HEK293 (cell line): ENCODE measurements at regions of chr9 and their contacts with region 1.

Region 1: GRCh38 chr9:98056269-98057137 is at the start of gene NANS:
- H3K4me3 ChIP-seq: peak within 1 kb of the TSS; percentile 83
- H3K27ac ChIP-seq: peak within 1 kb of the TSS; percentile 47
- H3K4me1 ChIP-seq: no peaks in the 10 kb centered on the region
- CTCF ChIP-seq: peak; percentile 46; the same call in 1 of the 2 replicates

Region 2: DNA sequence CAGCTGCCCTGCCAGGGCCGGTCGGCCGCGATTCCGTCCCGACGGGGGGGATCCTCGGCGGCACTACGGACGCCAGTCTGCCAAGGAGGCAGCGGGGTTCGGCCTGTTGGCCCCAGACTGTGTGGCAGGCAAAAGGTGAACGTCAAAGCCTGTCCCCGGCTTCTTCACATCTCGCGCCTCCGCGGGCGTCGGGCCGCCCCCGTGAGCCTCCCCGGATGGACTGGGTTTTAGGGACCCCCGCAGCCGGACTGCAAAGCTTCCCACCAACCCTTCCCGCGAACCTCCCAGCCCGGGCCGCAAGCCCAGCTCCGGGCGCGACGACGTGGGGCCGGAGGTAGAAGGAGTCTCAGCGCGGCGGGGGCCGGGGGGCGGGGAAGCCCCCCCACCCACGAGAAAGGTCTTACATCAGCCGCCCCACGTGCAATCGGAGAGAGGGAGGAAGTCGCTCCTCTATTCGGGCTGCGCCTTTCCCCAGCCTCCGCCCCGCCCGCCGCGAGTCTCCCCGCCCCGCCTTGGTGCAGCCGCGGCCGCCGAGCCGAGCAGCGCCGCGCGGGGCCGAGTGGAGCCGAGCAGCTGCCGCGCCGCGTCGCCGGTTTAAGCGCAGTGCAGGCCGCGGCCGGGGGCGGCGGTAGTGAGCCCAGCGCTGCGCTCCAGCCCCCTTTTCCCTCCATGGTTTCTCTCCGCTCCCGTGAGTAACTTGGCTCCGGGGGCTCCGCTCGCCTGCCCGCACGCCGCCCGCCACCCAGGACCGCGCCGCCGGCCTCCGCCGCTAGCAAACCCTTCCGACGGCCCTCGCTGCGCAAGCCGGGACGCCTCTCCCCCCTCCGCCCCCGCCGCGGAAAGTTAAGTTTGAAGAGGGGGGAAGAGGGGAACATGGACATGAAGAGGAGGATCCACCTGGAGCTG is 73.6 kb before region 1 on chr9 and contains the start of gene ANP32B:
- CTCF ChIA-PET with region 1: interaction called, 3 read pairs
- POLR2A ChIA-PET with region 1: interaction called, 41 read pairs
- H3K4me3 ChIP-seq: peak within 1 kb of the TSS; percentile 93
- H3K27ac ChIP-seq: peak within 1 kb of the TSS; percentile 100
- H3K4me1 ChIP-seq: peaks cover 9% of the 10 kb centered on the region
- CTCF ChIP-seq: peak; percentile 31; the same call in 1 of the 2 replicates

Region 3: GRCh38 chr9:98034593-98035546 is 21.6 kb before region 1 on chr9:
- CTCF ChIA-PET with region 1: interaction called, 7 read pairs
- POLR2A ChIA-PET with region 1: interaction called, 14 read pairs
- H3K4me3 ChIP-seq: no peak overlapping the region
- H3K27ac ChIP-seq: no peak overlapping the region
- H3K4me1 ChIP-seq: no peaks in the 10 kb centered on the region
- CTCF ChIP-seq: peak; percentile 33; the same call in 1 of the 2 replicates

Region 4: DNA sequence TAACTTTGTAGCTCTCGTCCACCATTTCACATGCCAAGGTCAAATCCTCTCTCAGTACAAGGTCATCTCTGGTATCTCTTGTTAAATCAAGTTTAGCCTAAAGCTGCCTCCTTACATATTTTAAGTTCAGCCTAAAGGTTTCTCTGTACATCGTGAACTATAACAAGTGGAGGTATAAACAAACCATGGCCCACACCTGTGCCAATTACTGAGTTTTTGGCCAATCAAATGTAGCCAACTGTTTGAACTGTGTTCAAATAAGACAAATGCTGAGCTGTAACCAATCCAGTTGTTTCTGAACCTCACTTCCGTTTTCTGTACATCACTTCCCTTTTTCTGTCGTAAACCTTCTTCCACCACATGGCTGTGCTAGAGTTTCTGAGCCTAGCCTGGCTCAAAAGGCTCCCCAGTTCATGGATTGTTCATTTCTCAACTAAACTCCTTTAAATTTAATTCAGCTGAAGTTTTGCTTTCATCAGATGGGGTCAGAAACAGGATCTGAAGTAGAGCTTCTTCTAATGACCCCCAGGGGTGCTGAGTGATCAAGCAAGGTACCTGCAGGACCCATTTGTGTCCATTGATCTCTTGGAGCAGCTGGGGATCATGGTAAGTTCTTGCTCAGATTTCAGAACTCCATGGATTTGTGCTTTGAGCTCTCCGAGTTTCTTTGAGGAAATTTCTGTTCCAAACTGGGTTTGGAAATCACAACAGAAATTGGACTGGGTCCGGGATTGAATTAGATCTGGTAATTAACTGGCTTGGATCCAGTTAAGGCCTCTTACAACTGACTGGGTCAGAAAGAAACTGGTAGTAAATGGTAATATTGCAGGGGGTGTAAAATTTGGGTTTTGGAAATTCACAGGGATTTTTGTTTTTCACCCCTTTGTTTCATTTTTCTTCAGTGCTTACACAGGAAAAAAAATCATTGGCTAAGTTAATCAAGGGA is 11.0 kb before region 1 on chr9:
- CTCF ChIA-PET with region 1: interaction called, 3 read pairs
- POLR2A ChIA-PET with region 1: interaction called, 14 read pairs
- H3K4me3 ChIP-seq: no peak overlapping the region
- H3K27ac ChIP-seq: no peak overlapping the region
- H3K4me1 ChIP-seq: no peaks in the 10 kb centered on the region
- CTCF ChIP-seq: no peak

Region 5: DNA sequence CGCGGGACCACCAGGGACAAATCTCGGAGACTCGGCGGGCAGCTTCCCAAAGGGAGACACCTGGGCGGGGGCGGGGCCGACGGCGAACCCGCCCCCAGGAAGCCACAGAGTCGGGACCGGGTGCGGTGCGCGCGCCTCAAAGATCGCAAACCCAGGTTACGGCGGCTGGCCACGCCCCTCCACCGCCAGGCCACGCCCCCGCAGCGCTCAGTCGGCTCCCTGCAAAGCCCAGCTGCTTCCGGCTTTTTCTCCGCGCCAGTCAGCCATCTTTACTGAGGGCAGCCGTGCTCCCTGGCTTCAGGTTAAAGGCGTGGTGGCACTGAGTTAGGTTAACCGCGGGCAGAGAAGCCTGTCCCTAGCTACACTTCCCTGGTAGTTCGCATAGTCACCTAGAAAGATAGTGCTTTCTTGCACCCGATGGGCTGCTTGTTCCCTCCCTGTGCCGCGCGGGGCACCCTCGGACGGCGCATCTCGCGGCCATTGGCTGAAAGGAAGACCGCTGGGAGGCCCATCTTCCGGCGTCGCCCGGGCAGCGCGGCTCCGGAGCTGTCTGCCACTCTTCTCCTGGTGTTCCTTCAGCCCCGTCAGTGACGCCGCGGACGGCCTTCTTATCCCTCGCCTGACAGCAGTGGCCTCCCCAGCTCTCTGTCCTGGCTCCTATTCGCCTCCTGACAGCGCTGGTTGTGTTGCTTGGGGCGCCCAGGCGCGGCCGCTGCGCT is 199.2 kb after region 1 on chr9 and contains the start of gene TBC1D2:
- CTCF ChIA-PET with region 1: interaction called, 5 read pairs
- POLR2A ChIA-PET with region 1: interaction called, 26 read pairs
- H3K4me3 ChIP-seq: peak within 1 kb of the TSS; percentile 88
- H3K27ac ChIP-seq: peak within 1 kb of the TSS; percentile 76
- H3K4me1 ChIP-seq: no peaks in the 10 kb centered on the region
- CTCF ChIP-seq: peak; percentile 79